ENCODE measurements at regions of chr7 and their contacts with region 1.

Region 1: GRCh38 chr7:99525713-99526440 is 21.4 kb downstream of the ZKSCAN5 start:
- DNase-seq: peak in 1 of 2 experiments; percentile 47
- H3K4me3 ChIP-seq: no peak overlapping the region
- H3K4me3 Mint-ChIP-seq: no peak overlapping the region
- H3K27ac Mint-ChIP-seq: no peak overlapping the region
- H3K4me1 ChIP-seq: no peaks in the 10 kb centered on the region
- H3K4me1 Mint-ChIP-seq: no peaks in the 10 kb centered on the region
- H3K27me3 ChIP-seq: no peaks in the 10 kb centered on the region
- H3K27me3 Mint-ChIP-seq: no peaks in the 10 kb centered on the region
- CTCF ChIP-seq: peak; percentile 29 to 54

Region 2: DNA sequence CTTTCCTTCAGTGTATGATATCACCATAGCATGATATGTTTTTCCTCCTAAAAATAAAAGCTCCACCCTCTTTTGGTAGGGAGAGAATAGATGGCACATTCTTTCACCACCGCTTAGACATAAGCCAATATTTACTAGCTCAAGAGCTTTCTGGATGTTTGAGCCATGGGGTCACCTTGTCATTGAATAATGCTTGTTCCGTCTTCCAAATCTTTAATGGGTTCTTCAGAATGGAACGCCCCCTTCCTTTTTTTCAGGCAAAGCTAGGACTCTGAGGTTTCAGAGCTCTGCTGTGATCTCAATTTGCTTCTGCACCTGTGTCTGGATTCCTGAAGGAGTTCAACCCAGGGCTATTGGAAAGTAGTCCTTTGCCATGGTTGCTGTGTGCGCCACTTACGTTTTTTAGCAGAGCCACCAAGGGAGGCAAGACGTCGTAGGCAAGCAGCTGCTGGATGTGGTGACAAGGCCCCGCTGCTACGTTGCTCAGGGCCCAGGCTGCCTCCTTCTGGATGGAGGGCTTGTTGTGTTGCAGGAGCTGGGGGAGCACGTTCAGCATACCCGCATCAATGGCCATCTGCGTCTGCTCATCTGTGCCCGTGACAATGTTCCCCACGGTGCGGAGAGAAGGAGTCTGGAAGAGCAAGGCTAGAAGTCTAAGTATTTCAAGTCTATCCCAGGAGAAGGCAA is 341.2 kb before region 1 on chr7:
- CTCF ChIA-PET with region 1: no interaction called
- POLR2A ChIA-PET with region 1: no interaction called
- intact Hi-C with region 1: no loop called
- DNase-seq: no peak
- H3K4me3 ChIP-seq: no peak overlapping the region
- H3K4me3 Mint-ChIP-seq: no peak overlapping the region
- H3K27ac Mint-ChIP-seq: no peak overlapping the region
- H3K4me1 ChIP-seq: no peaks in the 10 kb centered on the region
- H3K4me1 Mint-ChIP-seq: no peaks in the 10 kb centered on the region
- H3K27me3 ChIP-seq: no peaks in the 10 kb centered on the region
- H3K27me3 Mint-ChIP-seq: peaks cover 6% of the 10 kb centered on the region
- CTCF ChIP-seq: no peak

Region 3: GRCh38 chr7:99438573-99439480 is 87.0 kb before region 1 on chr7 and contains the starts of genes CPSF4 and PTCD1:
- CTCF ChIA-PET with region 1: no interaction called
- POLR2A ChIA-PET with region 1: no interaction called
- intact Hi-C with region 1: no loop called
- DNase-seq: peak; percentile 96 to 97
- H3K4me3 ChIP-seq: peak within 1 kb of the TSS; percentile 100
- H3K4me3 Mint-ChIP-seq: peak within 1 kb of the TSS; percentile 100
- H3K27ac Mint-ChIP-seq: peak within 1 kb of the TSS; percentile 98
- H3K4me1 ChIP-seq: peaks cover 30% of the 10 kb centered on the region
- H3K4me1 Mint-ChIP-seq: peaks cover 20% of the 10 kb centered on the region
- H3K27me3 ChIP-seq: no peaks in the 10 kb centered on the region
- H3K27me3 Mint-ChIP-seq: no peaks in the 10 kb centered on the region
- CTCF ChIP-seq: no peak
- total RNA-seq, gene CPSF4: 133 and 158 TPM in 2 replicates
- total RNA-seq, gene PTCD1: 59.6 TPM in 2 replicates

Region 4: GRCh38 chr7:99579956-99580777 is 54.3 kb after region 1 on chr7:
- CTCF ChIA-PET with region 1: interaction called, 8 read pairs
- POLR2A ChIA-PET with region 1: no interaction called
- intact Hi-C with region 1: loop called (anchors 10 kb)
- DNase-seq: peak in 1 of 2 experiments; percentile 72
- H3K4me3 ChIP-seq: peak overlapping the region; percentile 37
- H3K4me3 Mint-ChIP-seq: peak overlapping the region; percentile 72
- H3K27ac Mint-ChIP-seq: no peak overlapping the region
- H3K4me1 ChIP-seq: no peaks in the 10 kb centered on the region
- H3K4me1 Mint-ChIP-seq: no peaks in the 10 kb centered on the region
- H3K27me3 ChIP-seq: no peaks in the 10 kb centered on the region
- H3K27me3 Mint-ChIP-seq: peaks cover 5% of the 10 kb centered on the region
- CTCF ChIP-seq: peak; percentile 30 to 60

Measured in Caco-2 (cell line).